Endothelial cell of umbilical vein (primary cell): ENCODE measurements at regions of chr5 and their contacts with region 1.

Region 1: GRCh38 chr5:151825445-151825844 is 53.7 kb downstream of the G3BP1 start:
- DNase-seq: peak; percentile 53
- H3K4me3 ChIP-seq: no peak overlapping the region
- H3K27ac ChIP-seq: no peak overlapping the region
- H3K4me1 ChIP-seq: no peaks in the 10 kb centered on the region
- H3K27me3 ChIP-seq: no peaks in the 10 kb centered on the region
- CTCF ChIP-seq: peak; percentile 69 to 78
- POLR2A ChIP-seq: no peak

Region 2: DNA sequence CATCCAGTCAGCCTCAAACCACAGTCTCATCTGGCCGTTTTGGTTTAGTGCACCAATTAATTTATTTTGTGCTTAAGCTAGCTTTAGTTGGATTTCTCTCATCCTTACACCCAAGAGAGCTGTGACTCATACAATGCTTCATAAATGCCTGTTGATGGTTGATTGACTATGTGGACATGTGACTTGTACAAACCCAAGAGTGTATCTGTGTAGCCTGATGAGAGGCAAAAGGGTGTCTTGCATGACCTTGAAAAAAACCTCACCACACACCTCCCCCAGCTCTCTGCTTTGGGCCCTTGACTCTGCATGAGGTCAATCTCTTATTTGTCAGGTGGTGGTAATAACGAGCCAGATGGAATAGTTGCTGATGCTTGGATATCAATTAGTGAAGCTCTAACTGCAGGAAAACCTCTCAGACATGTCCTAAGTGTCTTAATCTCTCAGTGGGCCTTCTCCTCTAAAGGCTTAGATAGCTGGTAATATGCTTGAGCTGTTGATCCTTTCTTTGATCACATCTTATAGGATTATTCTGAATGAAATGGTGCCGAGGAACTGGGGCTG is 109.8 kb after region 1 on chr5:
- CTCF ChIA-PET with region 1: no interaction called
- POLR2A ChIA-PET with region 1: no interaction called
- dilution Hi-C with region 1: no loop called
- intact Hi-C with region 1: no loop called
- DNase-seq: no peak
- H3K4me3 ChIP-seq: no peak overlapping the region
- H3K27ac ChIP-seq: no peak overlapping the region
- H3K4me1 ChIP-seq: no peaks in the 10 kb centered on the region
- H3K27me3 ChIP-seq: no peaks in the 10 kb centered on the region
- CTCF ChIP-seq: no peak
- POLR2A ChIP-seq: no peak

Region 3: DNA sequence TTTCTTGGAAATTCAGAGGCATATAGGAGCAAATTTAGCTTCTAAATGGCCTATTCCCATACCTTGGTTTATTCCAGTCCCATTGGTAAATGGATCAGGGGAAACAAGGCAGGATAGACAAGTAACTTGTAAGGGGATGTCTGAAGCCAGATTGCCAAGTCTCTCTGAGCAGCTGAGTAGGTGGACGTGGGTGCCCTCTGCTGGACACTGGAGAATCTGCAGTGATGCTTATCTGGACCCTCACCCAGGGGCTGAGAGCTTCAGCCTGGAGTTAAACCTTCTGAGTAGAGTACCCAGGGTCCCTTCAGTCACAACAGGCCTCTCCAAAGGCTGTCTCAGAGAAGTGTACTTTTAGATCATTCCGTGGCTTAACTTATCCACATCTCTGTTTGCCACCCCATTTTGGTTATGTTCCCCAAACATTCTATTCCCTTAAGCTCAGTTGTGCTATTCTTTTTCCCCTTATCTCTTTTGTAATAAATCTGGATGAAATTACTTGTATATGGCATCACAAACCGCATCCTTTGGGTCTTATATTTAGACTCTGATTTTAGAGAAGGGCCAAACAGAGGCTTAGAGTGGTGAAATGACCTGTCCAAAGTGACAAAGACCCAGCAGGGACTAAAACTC is 317.5 kb after region 1 on chr5:
- CTCF ChIA-PET with region 1: interaction called, 208 read pairs
- POLR2A ChIA-PET with region 1: interaction called, 4 read pairs
- dilution Hi-C with region 1: no loop called
- intact Hi-C with region 1: loop called (anchors 1 kb)
- DNase-seq: peak; percentile 47
- H3K4me3 ChIP-seq: no peak overlapping the region
- H3K27ac ChIP-seq: no peak overlapping the region
- H3K4me1 ChIP-seq: no peaks in the 10 kb centered on the region
- H3K27me3 ChIP-seq: no peaks in the 10 kb centered on the region
- CTCF ChIP-seq: peak; percentile 76 to 94
- POLR2A ChIP-seq: no peak

Region 4: GRCh38 chr5:152349683-152350526 is 524.5 kb after region 1 on chr5:
- CTCF ChIA-PET with region 1: interaction called, 7 read pairs
- POLR2A ChIA-PET with region 1: no interaction called
- dilution Hi-C with region 1: no loop called
- intact Hi-C with region 1: loop called (anchors 1 kb)
- DNase-seq: peak; percentile 5
- H3K4me3 ChIP-seq: no peak overlapping the region
- H3K27ac ChIP-seq: no peak overlapping the region
- H3K4me1 ChIP-seq: no peaks in the 10 kb centered on the region
- H3K27me3 ChIP-seq: no peaks in the 10 kb centered on the region
- CTCF ChIP-seq: peak; percentile 58 to 72
- POLR2A ChIP-seq: no peak

Region 5: DNA sequence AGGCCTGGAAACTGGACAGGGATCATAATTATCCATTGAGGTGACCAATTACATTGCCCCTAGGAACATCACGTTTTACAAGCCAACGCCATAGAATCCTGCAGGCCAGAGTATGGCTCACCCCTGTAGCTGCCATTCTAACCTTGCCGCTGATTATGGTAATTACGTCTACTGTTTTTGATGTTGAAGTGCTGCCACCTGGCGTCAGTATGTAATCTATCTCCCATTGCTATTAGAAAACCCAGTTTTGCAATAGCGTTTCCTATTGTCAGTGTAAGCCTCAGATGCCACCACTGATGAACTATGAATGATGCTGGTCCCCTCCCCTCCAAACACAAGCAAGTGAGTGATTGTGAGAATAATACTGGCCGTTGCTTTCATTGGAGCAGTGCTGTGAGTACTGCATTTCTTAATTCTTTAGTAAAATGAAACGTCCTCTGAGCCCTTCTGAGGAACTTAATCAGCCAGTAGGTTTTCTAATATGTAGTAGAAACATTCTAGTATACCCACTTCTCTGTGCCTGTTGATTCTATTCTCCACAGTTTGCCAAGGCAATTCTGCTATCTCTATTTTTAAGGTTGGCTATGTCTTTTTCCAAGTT is 680.1 kb after region 1 on chr5:
- CTCF ChIA-PET with region 1: interaction called, 34 read pairs
- POLR2A ChIA-PET with region 1: no interaction called
- dilution Hi-C with region 1: no loop called
- intact Hi-C with region 1: loop called (anchors 1 kb)
- DNase-seq: peak; percentile 37
- H3K4me3 ChIP-seq: no peak overlapping the region
- H3K27ac ChIP-seq: no peak overlapping the region
- H3K4me1 ChIP-seq: no peaks in the 10 kb centered on the region
- H3K27me3 ChIP-seq: no peaks in the 10 kb centered on the region
- CTCF ChIP-seq: peak; percentile 53 to 55
- POLR2A ChIP-seq: no peak

Region 6: DNA sequence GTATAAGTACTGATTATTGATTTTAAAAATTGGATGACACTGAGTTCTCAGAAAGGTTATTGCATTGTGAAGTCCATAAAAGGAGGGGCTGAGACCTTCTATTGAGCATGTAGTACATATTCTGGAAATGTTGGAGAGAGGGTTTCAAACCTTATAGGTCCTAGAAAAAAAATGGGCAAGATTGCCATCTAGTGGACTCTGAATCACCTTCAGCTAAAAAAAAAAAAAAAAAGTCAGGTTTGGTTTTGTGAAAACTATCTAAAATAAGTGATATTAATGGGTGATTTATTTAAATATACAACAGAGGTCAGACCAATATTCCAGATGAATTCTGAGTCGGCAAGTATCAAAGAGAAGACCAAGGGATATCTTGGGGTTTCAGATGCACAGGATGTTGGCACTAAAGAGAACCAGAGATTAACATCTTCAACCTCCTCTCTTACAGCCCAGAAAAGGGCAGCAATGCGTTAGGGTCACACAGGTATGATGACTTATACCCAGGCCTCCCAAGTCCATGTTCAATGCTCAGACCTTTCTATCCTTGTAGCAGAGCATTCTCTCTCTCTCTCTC is 689.5 kb after region 1 on chr5:
- CTCF ChIA-PET with region 1: interaction called, 22 read pairs
- POLR2A ChIA-PET with region 1: no interaction called
- dilution Hi-C with region 1: no loop called
- intact Hi-C with region 1: loop called (anchors 2 kb)
- DNase-seq: peak; percentile 16
- H3K4me3 ChIP-seq: no peak overlapping the region
- H3K27ac ChIP-seq: no peak overlapping the region
- H3K4me1 ChIP-seq: no peaks in the 10 kb centered on the region
- H3K27me3 ChIP-seq: no peaks in the 10 kb centered on the region
- CTCF ChIP-seq: peak in 1 of 2 donors; percentile 34
- POLR2A ChIP-seq: no peak